Vagina (tissue), 2 donors: ENCODE measurements at regions of chr2 and their contacts with region 1.

Region 1: GRCh38 chr2:54456612-54457322 is 640 bp downstream of the SPTBN1 start:
- DNase-seq: no peak
- H3K4me3 ChIP-seq: peak overlapping the region; percentile 71 to 95
- H3K27ac ChIP-seq: peak overlapping the region; percentile 92
- H3K4me1 ChIP-seq: peaks cover 34% of the 10 kb centered on the region
- H3K27me3 ChIP-seq: no peaks in the 10 kb centered on the region
- CTCF ChIP-seq: no peak
- POLR2A ChIP-seq: no peak

Region 2: GRCh38 chr2:53848062-53848461 is 608.7 kb before region 1 on chr2:
- intact Hi-C with region 1: no loop called
- DNase-seq: no peak
- H3K4me3 ChIP-seq: no peak overlapping the region
- H3K27ac ChIP-seq: no peak overlapping the region
- H3K4me1 ChIP-seq: no peaks in the 10 kb centered on the region
- H3K27me3 ChIP-seq: no peaks in the 10 kb centered on the region
- CTCF ChIP-seq: no peak
- POLR2A ChIP-seq: no peak

Region 3: DNA sequence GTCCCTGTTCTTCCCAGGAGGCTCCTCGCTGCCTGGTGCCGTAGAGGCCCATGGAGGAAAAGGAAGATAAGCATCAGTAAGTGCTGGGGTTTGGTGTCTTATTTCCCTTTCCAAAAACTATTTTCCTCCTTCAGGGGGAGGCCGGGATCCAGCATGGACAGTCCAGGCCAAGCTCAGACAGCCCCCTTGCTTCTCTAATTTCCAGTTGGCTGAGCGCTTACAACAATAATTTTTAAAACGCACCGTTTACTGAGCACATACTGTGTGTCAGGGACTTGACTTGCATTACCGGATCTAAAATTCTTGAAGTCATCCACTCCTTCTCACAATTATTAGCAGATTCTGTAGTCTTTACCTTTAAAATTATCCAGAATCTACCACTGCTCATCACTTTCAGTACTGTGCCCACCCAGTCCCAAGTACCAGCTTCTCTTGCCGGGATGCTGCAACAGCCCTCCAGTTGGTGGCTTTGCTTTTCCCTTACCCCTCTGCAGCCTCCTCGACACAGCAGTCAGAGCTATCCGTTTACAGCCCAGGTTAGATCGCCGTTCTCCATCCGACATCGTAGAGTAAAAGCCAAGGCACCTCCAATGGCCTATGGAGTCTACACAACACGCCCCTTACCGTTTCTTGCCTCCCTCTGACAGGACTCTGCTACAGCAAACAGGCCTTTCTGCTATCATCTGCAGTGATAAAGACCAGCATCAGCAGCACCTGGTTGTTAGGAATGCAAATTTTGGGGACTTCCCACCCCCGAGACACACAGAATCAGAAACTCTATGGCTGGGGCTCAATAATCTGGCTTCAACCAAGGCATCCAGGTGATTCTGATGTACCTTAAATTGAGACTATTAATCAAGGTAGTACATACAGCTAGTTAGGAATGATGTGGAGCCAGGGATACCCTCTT is 125.6 kb before region 1 on chr2:
- intact Hi-C with region 1: loop called (anchors 1 kb)
- DNase-seq: no peak
- H3K4me3 ChIP-seq: peak overlapping the region; percentile 50 to 65
- H3K27ac ChIP-seq: peak overlapping the region; percentile 86
- H3K4me1 ChIP-seq: peaks cover 15% of the 10 kb centered on the region
- H3K27me3 ChIP-seq: no peaks in the 10 kb centered on the region
- CTCF ChIP-seq: no peak
- POLR2A ChIP-seq: no peak

Region 4: GRCh38 chr2:54370405-54371104 is 86.2 kb before region 1 on chr2:
- intact Hi-C with region 1: no loop called
- DNase-seq: no peak
- H3K4me3 ChIP-seq: no peak overlapping the region
- H3K27ac ChIP-seq: peak overlapping the region; percentile 55
- H3K4me1 ChIP-seq: peaks cover 21% of the 10 kb centered on the region
- H3K27me3 ChIP-seq: no peaks in the 10 kb centered on the region
- CTCF ChIP-seq: no peak
- POLR2A ChIP-seq: no peak